Posterior cingulate gyrus (tissue), 11 donors: ENCODE measurements at regions of chr4 and their contacts with region 1.

Region 1: DNA sequence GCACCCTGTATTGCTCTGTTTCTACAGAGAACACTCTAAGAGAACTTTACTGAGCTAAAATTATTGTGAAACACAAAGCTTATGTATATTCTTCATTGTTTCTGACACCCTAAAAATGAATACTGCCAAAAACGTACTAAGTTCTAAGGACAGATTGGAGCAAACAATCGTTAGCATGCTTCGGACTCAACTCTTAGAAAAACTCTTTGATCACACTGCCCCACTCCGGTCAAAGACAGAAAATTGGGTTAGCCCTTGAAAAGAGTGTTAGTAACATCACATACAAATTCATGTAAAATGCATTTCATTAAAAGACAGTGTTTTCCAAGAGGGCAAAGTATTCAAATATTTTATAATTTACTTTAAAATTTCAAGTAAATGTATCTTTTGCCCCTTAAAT is 177.4 kb downstream of the DCHS2 start:
- DNase-seq: no peak

Region 2: DNA sequence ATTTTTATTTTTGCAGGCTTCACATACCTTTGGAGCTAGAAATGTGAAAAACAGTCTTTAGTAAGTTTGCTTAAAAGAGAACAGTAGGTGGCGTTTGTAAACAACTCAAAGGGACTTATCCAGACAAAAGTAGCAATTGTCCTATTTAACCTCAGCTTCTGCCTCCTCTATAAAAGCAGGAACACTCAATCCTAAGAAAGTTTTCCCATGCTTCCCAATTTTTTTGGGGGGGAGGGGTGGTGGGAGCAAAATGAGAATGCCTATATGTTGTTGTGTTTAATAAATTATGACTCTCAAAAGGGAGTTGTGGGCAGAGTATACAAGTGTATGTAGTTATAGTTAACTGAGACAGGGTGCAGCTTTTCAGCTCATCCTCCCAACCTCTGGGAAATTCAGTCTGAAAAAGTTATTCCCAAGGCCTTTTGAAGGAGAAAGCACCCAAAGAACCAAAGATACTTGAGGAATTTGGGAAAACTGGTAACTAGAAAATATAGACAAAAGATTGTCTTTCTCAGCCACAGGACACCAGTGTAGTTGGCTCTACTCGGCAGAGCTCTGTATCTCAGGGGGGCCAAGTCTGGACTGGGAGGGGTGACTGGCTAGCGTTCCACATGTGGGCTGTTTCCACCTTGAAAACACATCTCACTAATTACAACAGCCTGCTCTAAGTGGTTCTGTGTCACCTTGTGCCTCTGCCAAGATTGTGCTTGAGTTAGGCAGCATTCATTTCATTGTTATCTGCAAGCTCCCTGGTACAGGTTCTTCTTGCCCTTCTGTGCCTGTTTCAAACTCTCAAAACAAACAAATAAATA is 528.1 kb before region 1 on chr4:
- intact Hi-C with region 1: loop called (anchors 2 kb)
- DNase-seq: no peak